ENCODE measurements at regions of chr13 and their contacts with region 1.

Region 1: DNA sequence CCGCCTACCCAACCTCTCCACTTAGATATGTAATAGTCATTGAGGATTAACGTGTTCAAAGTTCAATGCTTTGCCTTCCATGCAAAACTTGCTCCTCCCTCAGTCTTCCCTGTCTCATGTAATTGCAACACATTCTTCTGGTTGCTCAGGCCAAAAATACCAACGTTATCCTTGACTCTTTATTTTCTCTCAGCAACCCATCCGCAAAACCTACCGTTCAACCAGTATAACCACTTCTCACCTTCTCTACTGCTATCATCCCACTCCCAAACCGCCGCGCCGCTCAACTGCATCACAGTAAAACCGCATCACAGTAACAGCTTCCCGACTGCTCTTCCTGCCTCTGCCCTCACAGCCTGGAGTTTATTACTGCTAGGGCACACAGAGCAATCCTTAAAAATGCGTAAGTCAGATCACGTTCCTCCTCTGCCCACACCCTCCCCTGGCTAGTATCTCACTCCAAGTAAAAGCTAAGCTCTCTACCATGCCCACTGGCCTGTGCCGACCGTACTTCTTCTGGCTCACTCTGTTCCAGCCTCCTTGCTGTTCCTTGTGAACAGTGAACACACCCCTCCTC is 8.2 kb downstream of the MTIF3 start:
- DNase-seq: no peak
- ATAC-seq: no peak
- H3K4me3 ChIP-seq: no peak overlapping the region
- H3K27ac ChIP-seq: no peak overlapping the region
- H3K4me1 ChIP-seq: no peaks in the 10 kb centered on the region
- H3K27me3 ChIP-seq: no peaks in the 10 kb centered on the region
- CTCF ChIP-seq: no peak
- POLR2A ChIP-seq: no peak
- RAD21 ChIP-seq: no peak

Region 2: DNA sequence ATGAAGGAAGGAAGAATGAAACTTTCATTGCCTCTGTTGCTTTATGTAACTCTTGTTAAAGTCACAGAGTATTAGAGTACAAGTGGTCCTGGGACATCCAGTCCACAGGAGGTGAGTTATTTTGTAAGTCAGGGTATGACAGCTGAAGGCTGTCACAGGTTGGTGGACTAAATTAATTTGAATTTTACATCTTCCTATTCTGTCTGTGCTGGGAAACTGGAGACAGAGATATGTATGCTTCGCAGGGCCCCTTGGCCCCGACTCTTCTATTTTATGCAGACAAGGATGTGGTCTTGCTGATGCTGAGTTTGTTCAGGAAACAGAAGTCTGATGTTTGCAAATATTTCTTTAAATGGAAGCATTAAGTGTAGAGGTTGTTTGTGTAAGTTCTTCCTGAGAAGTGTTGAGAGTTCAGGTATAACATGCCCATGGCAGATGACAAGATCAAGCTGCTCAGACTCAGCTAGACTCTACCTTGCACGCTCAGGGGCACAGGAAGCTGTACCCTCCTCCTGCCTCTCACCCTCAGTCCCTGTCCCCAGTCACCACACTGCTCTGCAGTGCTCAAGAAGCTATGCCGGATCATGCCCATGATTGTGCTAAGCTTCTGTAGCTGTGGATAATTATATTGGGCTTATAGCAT is 148.2 kb before region 1 on chr13:
- CTCF ChIA-PET with region 1: no interaction called
- POLR2A ChIA-PET with region 1: no interaction called
- dilution Hi-C with region 1: no loop called
- in situ Hi-C with region 1: no loop called
- intact Hi-C with region 1: no loop called
- DNase-seq: no peak
- ATAC-seq: no peak
- H3K4me3 ChIP-seq: no peak overlapping the region
- H3K27ac ChIP-seq: no peak overlapping the region
- H3K4me1 ChIP-seq: no peaks in the 10 kb centered on the region; the same call in 1 of the 2 replicates
- H3K27me3 ChIP-seq: peaks cover 43% of the 10 kb centered on the region
- CTCF ChIP-seq: no peak
- POLR2A ChIP-seq: no peak
- RAD21 ChIP-seq: no peak

Region 3: DNA sequence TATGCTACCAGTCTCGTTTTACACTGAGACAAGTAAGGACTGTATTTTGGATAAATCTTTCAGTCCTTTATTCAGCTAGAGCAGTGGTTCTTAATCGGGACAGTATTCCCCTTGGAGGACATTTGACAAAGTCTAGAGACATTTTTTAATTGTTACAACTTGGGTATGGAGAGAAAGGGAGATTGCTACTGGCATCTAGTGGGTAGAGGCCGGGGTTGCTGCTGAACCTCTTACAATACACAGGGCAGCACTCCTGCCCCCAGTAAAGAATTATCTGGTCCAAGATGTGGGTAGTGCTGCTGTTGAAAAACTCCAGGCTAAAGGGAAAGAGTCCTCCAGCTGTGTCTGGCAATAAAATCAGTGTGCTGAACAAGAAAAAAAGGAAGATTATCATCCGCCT is 1818.5 kb after region 1 on chr13:
- CTCF ChIA-PET with region 1: interaction called, 10 read pairs
- POLR2A ChIA-PET with region 1: no interaction called
- dilution Hi-C with region 1: no loop called
- in situ Hi-C with region 1: no loop called
- intact Hi-C with region 1: no loop called
- DNase-seq: no peak
- ATAC-seq: no peak
- H3K4me3 ChIP-seq: no peak overlapping the region
- H3K27ac ChIP-seq: no peak overlapping the region
- H3K4me1 ChIP-seq: no peaks in the 10 kb centered on the region
- H3K27me3 ChIP-seq: no peaks in the 10 kb centered on the region
- CTCF ChIP-seq: no peak
- POLR2A ChIP-seq: no peak
- RAD21 ChIP-seq: no peak

Measured in IMR-90 (cell line).